IMR-90 (cell line): ENCODE measurements at regions of chr7 and their contacts with region 1.

Region 1: DNA sequence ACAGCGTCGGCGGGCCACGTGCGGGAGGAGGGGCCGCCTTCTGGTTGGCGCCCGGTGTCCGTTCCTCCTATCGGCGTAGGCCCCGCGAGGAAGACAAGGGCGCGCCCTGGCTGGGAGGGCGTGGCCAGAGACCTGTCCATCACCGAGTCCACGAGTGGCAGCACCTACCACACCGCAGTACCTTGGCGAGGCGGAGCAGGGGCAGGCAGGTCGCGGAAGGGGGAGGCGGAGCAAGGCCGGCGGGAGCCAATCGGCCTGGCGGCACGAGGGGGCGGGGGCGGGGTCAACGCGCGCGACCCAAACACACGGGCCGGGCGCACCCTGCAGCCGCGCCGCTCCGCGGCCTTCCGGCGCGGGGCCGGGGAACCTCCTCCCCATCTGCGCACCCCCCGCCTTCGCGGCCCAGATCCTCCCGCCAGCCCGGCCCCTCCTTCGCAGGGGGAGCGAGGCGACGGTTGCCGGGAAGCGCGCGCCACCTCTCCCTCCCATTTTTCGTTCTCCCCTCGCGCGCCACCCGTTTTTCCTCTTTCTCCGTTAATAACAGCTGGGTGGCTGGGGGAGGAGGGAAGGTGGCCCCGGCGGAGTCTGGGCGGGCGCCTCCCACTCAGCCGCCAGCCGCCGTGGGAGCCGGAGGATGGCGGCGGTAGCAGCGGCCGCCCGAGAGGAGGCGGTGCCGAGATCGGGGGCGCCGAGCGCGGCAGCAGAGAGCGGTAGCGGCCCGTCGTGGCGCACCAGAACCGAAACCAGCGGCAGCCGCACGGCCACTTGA is at the start of gene ZNRF2:
- DNase-seq: peak; percentile 95
- ATAC-seq: peak; percentile 86
- H3K4me3 ChIP-seq: peak within 1 kb of the TSS; percentile 77
- H3K27ac ChIP-seq: no peak within 1 kb of the TSS; the same call in 1 of the 2 replicates
- H3K4me1 ChIP-seq: no peaks in the 10 kb centered on the region
- H3K27me3 ChIP-seq: 0 out of 2 replicates have a peak, but pooled peaks cover 3% of the 10 kb centered on the region
- CTCF ChIP-seq: peak; percentile 47
- POLR2A ChIP-seq: no peak
- RAD21 ChIP-seq: peak; percentile 15; the same call in 1 of the 2 replicates
- total RNA-seq, gene ZNRF2: 0.54 and 0.83 TPM in 2 replicates

Region 2: GRCh38 chr7:30154111-30154587 is 130.3 kb before region 1 on chr7:
- CTCF ChIA-PET with region 1: no interaction called
- POLR2A ChIA-PET with region 1: no interaction called
- dilution Hi-C with region 1: no loop called
- in situ Hi-C with region 1: no loop called
- intact Hi-C with region 1: no loop called
- DNase-seq: no peak
- ATAC-seq: no peak
- H3K4me3 ChIP-seq: no peak overlapping the region
- H3K27ac ChIP-seq: no peak overlapping the region
- H3K4me1 ChIP-seq: no peaks in the 10 kb centered on the region
- H3K27me3 ChIP-seq: no peaks in the 10 kb centered on the region
- CTCF ChIP-seq: no peak
- POLR2A ChIP-seq: no peak
- RAD21 ChIP-seq: no peak

Region 3: GRCh38 chr7:30193336-30193943 is 91.0 kb before region 1 on chr7:
- CTCF ChIA-PET with region 1: no interaction called
- POLR2A ChIA-PET with region 1: no interaction called
- dilution Hi-C with region 1: no loop called
- in situ Hi-C with region 1: no loop called
- intact Hi-C with region 1: no loop called
- DNase-seq: no peak
- ATAC-seq: no peak
- H3K4me3 ChIP-seq: no peak overlapping the region
- H3K27ac ChIP-seq: no peak overlapping the region
- H3K4me1 ChIP-seq: no peaks in the 10 kb centered on the region
- H3K27me3 ChIP-seq: no peaks in the 10 kb centered on the region
- CTCF ChIP-seq: no peak
- POLR2A ChIP-seq: no peak
- RAD21 ChIP-seq: no peak

Region 4: DNA sequence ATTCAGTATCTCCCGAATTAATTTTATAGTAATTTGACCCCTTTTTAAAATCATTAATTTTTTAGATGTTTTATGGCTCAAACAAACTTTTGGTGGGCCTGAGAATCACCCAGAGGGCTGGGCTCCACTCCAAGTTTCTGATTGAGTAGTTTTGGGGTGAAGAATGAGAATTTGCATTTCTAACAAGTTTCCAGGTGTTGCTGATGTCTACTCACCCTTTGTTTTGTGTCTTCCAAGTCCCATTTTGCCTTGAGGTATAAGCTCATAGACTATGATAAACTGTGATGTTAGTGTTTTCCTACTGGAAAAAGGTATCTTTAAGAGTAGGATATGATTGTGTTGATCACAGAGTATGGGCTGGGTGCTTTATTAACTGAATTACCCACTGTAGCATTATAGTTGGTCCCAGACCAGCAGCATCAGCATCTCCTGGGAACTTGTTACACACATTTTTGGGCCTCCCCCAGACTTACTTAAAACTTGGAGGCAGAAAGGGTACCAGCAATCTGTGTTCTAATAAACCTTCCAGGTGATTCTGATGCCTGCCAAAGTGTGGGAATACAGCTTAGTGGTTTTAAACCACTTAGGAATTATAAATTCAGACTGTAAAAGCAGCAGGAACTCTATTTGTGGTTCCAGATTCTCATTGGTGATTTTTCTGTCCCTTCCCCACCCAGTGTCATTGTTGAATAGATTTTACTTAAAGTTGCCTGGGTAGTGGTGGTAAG is 19.0 kb after region 1 on chr7:
- CTCF ChIA-PET with region 1: no interaction called
- POLR2A ChIA-PET with region 1: no interaction called
- dilution Hi-C with region 1: no loop called
- in situ Hi-C with region 1: no loop called
- intact Hi-C with region 1: no loop called
- DNase-seq: no peak
- ATAC-seq: no peak
- H3K4me3 ChIP-seq: no peak overlapping the region
- H3K27ac ChIP-seq: no peak overlapping the region
- H3K4me1 ChIP-seq: no peaks in the 10 kb centered on the region
- H3K27me3 ChIP-seq: no peaks in the 10 kb centered on the region
- CTCF ChIP-seq: no peak
- POLR2A ChIP-seq: no peak
- RAD21 ChIP-seq: no peak

Region 5: GRCh38 chr7:30348083-30348560 is 63.6 kb after region 1 on chr7:
- CTCF ChIA-PET with region 1: no interaction called
- POLR2A ChIA-PET with region 1: no interaction called
- dilution Hi-C with region 1: no loop called
- in situ Hi-C with region 1: no loop called
- intact Hi-C with region 1: loop called (anchors 5 kb)
- DNase-seq: peak; percentile 88
- ATAC-seq: peak; percentile 84
- H3K4me3 ChIP-seq: no peak overlapping the region
- H3K27ac ChIP-seq: no peak overlapping the region
- H3K4me1 ChIP-seq: peaks cover 2% of the 10 kb centered on the region; the same call in 1 of the 2 replicates
- H3K27me3 ChIP-seq: no peaks in the 10 kb centered on the region
- CTCF ChIP-seq: no peak
- POLR2A ChIP-seq: no peak
- RAD21 ChIP-seq: no peak